IMR-90 (cell line): ENCODE measurements at regions of chr3 and their contacts with region 1.

Region 1: DNA sequence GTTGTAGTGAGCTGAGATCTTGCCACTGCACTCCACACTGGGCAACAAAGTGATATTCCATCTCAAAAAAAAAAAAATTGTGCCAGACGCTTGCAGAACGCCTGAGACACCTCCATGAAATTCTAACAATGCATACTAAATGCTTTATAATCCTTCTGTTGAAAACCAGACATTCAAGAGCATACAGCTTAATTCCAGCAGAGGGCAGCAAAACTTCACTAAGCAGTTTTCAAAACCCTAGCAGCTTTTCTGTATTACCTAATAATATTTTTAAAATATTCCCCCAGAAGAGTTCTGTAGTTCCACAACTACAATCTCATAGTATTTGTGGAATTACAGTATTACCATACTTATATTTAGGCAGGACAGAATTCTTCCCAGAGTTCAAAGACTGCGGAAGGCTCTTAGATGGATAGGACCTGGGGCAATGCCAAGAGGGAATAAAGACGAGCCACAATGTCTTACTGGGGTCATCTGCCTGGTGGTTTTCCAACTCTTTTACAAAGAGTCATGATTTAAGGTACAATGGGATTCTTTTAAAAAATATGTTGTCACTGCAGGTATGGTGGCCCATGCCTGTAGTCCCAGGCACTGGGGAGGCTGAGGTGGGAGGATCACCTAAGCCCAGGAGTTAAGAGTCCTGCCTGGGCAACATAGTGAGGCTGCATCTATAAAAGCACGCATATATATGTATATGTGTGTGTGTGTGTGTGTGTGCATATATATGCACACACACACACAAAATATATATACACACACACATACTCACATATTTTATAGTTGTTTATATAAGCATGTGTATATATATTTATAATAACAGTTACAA is 19.6 kb upstream of the TASOR start:
- DNase-seq: peak; percentile 76
- ATAC-seq: peak; percentile 88
- H3K4me3 ChIP-seq: no peak overlapping the region
- H3K27ac ChIP-seq: no peak overlapping the region
- H3K4me1 ChIP-seq: no peaks in the 10 kb centered on the region
- H3K27me3 ChIP-seq: peaks cover 1% of the 10 kb centered on the region; the same call in 1 of the 2 replicates
- CTCF ChIP-seq: peak; percentile 95
- POLR2A ChIP-seq: no peak
- RAD21 ChIP-seq: peak; percentile 95

Region 2: GRCh38 chr3:56783644-56784447 is 81.1 kb after region 1 on chr3:
- CTCF ChIA-PET with region 1: no interaction called
- POLR2A ChIA-PET with region 1: no interaction called
- dilution Hi-C with region 1: no loop called
- in situ Hi-C with region 1: no loop called
- intact Hi-C with region 1: loop called (anchors 5 kb)
- DNase-seq: peak; percentile 74
- ATAC-seq: peak; percentile 93
- H3K4me3 ChIP-seq: no peak overlapping the region
- H3K27ac ChIP-seq: peak overlapping the region; percentile 85; the same call in 1 of the 2 replicates
- H3K4me1 ChIP-seq: peaks cover 12% of the 10 kb centered on the region
- H3K27me3 ChIP-seq: no peaks in the 10 kb centered on the region
- CTCF ChIP-seq: no peak
- POLR2A ChIP-seq: no peak
- RAD21 ChIP-seq: no peak

Region 3: DNA sequence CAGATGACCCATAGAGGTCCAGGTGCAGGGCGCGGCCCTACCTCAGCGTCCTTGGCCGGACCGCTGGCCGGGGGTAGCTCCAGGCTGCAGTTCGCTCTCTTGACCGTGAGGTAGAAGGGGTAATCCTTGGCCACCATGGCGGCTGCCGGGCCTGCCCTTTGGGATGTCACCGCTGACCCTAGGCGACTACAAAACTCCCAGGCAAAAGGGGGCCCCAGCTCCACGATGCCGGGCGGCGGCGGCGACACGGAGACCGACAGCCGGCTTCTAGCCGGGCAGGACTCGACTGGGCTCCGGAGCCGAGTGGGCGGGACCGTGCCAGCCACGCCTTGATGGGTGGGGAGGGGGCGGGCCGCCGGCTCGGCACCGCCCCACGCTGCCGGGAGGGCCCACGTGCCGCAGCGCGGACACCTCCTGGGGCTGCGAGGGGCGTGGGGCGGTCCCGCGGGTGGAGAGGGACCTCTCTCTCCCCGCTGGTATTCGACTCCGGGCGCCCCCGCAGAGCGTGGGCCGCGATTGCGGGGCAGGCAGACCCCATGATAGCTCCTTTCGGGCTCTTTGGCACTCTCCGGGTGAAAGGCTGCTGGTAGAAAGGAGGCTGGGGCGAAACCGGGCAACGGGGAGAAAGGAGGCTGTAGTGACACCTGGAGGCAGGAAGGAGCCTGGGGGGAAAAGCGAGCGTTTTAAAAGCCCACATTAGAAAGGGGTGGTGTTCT is 99.1 kb after region 1 on chr3 and contains the start of gene ARHGEF3:
- CTCF ChIA-PET with region 1: interaction called, 17 read pairs
- POLR2A ChIA-PET with region 1: no interaction called
- dilution Hi-C with region 1: no loop called
- in situ Hi-C with region 1: loop called (anchors 10 kb)
- intact Hi-C with region 1: loop called (anchors 1 kb)
- DNase-seq: peak; percentile 48
- ATAC-seq: peak; percentile 99
- H3K4me3 ChIP-seq: peak within 1 kb of the TSS; percentile 73
- H3K27ac ChIP-seq: no peak within 1 kb of the TSS
- H3K4me1 ChIP-seq: peaks cover 3% of the 10 kb centered on the region; the same call in 1 of the 2 replicates
- H3K27me3 ChIP-seq: peaks cover 5% of the 10 kb centered on the region; the same call in 1 of the 2 replicates
- CTCF ChIP-seq: peak; percentile 27
- POLR2A ChIP-seq: 0 out of 2 replicates have a peak, but pooled peaks have one; percentile 41
- RAD21 ChIP-seq: no peak
- total RNA-seq, gene ARHGEF3: 2.3 and 2.5 TPM in 2 replicates

Region 4: GRCh38 chr3:56988458-56989168 is 285.9 kb after region 1 on chr3:
- CTCF ChIA-PET with region 1: interaction called, 29 read pairs
- POLR2A ChIA-PET with region 1: interaction called, 12 read pairs
- dilution Hi-C with region 1: no loop called
- in situ Hi-C with region 1: loop called (anchors 5 kb)
- intact Hi-C with region 1: loop called (anchors 1 kb)
- DNase-seq: peak; percentile 71
- ATAC-seq: peak; percentile 76
- H3K4me3 ChIP-seq: no peak overlapping the region
- H3K27ac ChIP-seq: no peak overlapping the region
- H3K4me1 ChIP-seq: peaks cover 10% of the 10 kb centered on the region; the same call in 1 of the 2 replicates
- H3K27me3 ChIP-seq: peaks cover 18% of the 10 kb centered on the region
- CTCF ChIP-seq: peak; percentile 86
- POLR2A ChIP-seq: 0 out of 2 replicates have a peak, but pooled peaks have one; percentile 49
- RAD21 ChIP-seq: peak; percentile 95

Region 5: DNA sequence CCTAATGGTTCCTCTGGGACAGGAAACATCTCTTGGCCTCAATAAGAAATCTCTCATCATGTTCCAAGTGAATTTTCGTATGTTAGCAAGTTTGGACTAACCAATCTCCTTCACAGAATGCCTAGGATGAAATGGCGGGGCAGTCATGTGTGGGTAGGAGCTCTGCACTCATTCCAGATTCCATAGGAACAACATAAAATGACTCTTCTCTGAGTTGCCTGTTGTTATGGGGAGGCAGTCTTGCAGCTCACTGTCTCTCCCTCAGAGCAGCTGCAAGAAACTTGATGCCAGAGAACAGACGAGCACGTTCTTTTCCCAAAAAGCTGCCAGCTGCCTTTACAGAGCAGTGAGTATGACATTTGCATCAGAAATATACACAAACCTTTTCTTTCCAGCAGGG is 391.9 kb after region 1 on chr3:
- CTCF ChIA-PET with region 1: no interaction called
- POLR2A ChIA-PET with region 1: no interaction called
- dilution Hi-C with region 1: no loop called
- in situ Hi-C with region 1: no loop called
- intact Hi-C with region 1: loop called (anchors 10 kb)
- DNase-seq: peak; percentile 73
- ATAC-seq: peak; percentile 72
- H3K4me3 ChIP-seq: no peak overlapping the region
- H3K27ac ChIP-seq: no peak overlapping the region; the same call in 1 of the 2 replicates
- H3K4me1 ChIP-seq: peaks cover 12% of the 10 kb centered on the region; the same call in 1 of the 2 replicates
- H3K27me3 ChIP-seq: no peaks in the 10 kb centered on the region
- CTCF ChIP-seq: no peak
- POLR2A ChIP-seq: no peak
- RAD21 ChIP-seq: no peak

Region 6: DNA sequence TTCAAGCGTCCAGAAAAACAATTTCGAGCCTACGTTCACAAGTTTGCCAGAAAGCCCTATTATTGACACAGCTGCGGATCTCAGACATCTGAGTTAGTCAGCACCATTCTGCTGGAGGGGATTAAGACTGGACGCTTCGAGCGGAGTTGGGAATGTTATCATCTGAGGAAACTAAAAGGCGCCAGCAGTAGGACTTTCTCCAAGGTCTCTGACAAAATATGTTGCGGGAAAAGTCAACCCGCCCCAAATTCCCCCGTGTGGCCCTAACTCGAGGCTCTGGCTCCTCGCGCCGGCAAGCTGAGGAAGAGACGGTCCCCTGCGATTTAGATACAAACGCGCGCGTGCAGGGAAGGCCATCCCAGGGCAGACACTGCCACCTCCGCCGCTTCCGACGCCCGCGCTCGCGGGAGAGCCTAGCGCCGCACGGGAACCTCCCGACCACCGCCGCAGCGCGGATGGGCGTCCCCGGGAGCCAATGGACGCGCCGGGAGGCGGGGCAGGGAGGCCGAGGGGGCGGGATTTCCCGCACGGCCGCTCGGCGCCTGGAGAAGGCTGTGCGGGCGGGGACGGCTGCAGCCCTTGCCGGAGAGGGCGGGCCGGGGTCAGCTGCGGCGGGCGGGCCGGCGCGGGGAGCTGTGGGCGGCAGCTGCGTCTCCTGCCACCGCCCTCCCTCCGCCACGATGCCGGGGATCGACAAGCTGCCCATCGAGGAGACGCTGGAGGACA is 524.7 kb after region 1 on chr3 and contains the start of gene APPL1:
- CTCF ChIA-PET with region 1: no interaction called
- POLR2A ChIA-PET with region 1: no interaction called
- dilution Hi-C with region 1: no loop called
- in situ Hi-C with region 1: no loop called
- intact Hi-C with region 1: loop called (anchors 10 kb)
- DNase-seq: peak; percentile 85
- ATAC-seq: peak; percentile 99
- H3K4me3 ChIP-seq: peak within 1 kb of the TSS; percentile 86
- H3K27ac ChIP-seq: peak within 1 kb of the TSS; percentile 72
- H3K4me1 ChIP-seq: peaks cover 2% of the 10 kb centered on the region; the same call in 1 of the 2 replicates
- H3K27me3 ChIP-seq: no peaks in the 10 kb centered on the region
- CTCF ChIP-seq: no peak
- POLR2A ChIP-seq: peak; percentile 49; the same call in 1 of the 2 replicates
- RAD21 ChIP-seq: no peak
- total RNA-seq, gene APPL1: 42.2 and 46.2 TPM in 2 replicates